ENCODE measurements at regions of chr5 and their contacts with region 1.

Region 1: GRCh38 chr5:177122296-177122965 is 11.1 kb upstream of the NSD1 start:
- DNase-seq: no peak
- ATAC-seq: no peak
- H3K4me3 ChIP-seq: no peak overlapping the region
- H3K4me3 Mint-ChIP-seq: no peak overlapping the region
- H3K27ac ChIP-seq: no peak overlapping the region
- H3K27ac Mint-ChIP-seq: no peak overlapping the region
- H3K4me1 ChIP-seq: peaks cover 0 to under 1% of the 10 kb centered on the region in 2 experiments
- H3K4me1 Mint-ChIP-seq: peaks cover 4 to 6% (median 5%) of the 10 kb centered on the region in 3 donors
- H3K27me3 ChIP-seq: no peaks in the 10 kb centered on the region
- H3K27me3 Mint-ChIP-seq: no peaks in the 10 kb centered on the region

Region 2: DNA sequence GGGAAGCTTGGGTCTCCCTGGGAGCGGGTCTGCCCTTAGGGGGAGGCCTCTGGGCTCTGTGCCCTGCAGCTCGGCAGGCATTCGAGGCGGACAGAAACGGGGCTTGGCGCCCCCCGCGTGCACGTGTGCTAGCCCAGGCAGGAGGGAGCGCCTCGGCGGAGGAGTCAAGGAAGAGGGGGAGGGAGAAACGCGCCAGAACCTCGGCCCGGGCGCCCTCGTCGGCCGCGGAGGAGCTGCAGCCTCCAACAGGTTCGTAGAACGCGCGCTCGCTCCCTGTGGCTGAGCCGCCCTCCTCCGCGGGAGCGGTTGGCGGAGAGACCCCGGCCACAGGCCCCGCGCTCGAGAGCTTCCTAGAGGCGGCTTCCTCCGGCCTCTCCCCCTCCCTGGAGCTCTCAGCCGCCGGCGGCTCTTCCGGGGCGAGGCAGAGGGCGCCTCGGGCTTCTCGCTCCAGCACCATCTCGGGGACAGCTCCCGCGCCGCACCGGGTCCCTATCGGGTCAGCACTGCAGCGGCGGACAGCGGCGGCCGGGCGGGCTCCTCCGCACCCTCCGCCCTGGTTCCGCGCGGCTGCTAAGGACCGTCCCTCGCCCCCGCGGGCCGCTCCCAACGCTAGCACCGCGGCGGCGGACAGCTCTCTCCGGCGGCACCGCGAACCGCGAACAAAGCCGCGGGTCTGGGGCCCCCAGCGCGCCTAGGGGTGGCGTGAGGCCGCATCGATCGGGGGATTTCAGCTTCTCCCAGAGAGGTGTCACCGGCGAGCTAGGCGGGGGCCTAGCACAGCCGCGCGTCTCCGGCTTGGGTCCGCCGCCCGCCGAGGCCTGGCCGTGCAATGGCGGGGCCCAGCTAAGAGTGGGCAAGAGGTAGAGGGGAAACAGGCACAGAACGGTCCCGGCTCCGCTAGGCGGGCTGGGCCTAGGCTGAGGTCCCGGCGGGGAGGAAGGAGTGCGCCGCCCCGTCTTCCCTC is 1325.6 kb before region 1 on chr5:
- CTCF ChIA-PET with region 1: no interaction called
- POLR2A ChIA-PET with region 1: no interaction called
- DNase-seq: peak; percentile 61 to 85 (median 76)
- ATAC-seq: peak; percentile 96 to 100 (median 99)
- H3K4me3 ChIP-seq: no peak overlapping the region
- H3K4me3 Mint-ChIP-seq: peak overlapping the region in 1 of 3 donors; percentile 28
- H3K27ac ChIP-seq: no peak overlapping the region
- H3K27ac Mint-ChIP-seq: no peak overlapping the region
- H3K4me1 ChIP-seq: peaks cover 0 to 16% of the 10 kb centered on the region in 2 experiments
- H3K4me1 Mint-ChIP-seq: peaks cover 8 to 17% (median 10%) of the 10 kb centered on the region in 3 donors
- H3K27me3 ChIP-seq: peaks cover 7 to 51% of the 10 kb centered on the region in 2 experiments
- H3K27me3 Mint-ChIP-seq: peaks cover 72 to 77% of the 10 kb centered on the region in 2 donors

Region 3: GRCh38 chr5:177194274-177194673 is 71.8 kb after region 1 on chr5:
- CTCF ChIA-PET with region 1: interaction called in 1 of 2 experiments, 3 read pairs
- POLR2A ChIA-PET with region 1: interaction called in 1 of 2 experiments, 14 read pairs
- DNase-seq: no peak
- ATAC-seq: no peak
- H3K4me3 ChIP-seq: no peak overlapping the region
- H3K4me3 Mint-ChIP-seq: no peak overlapping the region
- H3K27ac ChIP-seq: no peak overlapping the region
- H3K27ac Mint-ChIP-seq: no peak overlapping the region
- H3K4me1 ChIP-seq: no peaks in the 10 kb centered on the region
- H3K4me1 Mint-ChIP-seq: peaks cover 11 to 17% (median 15%) of the 10 kb centered on the region in 3 donors
- H3K27me3 ChIP-seq: no peaks in the 10 kb centered on the region
- H3K27me3 Mint-ChIP-seq: no peaks in the 10 kb centered on the region